Activated B cell treated with CpG ODN at 0.5 μM for 24 hours (primary cell): ENCODE measurements at regions of chr5 and their contacts with region 1.

Region 1: GRCh38 chr5:138575194-138576015 is at the start of gene HSPA9:
- DNase-seq: peak; percentile 92
- ATAC-seq: peak; percentile 86
- H3K4me3 Mint-ChIP-seq: peak within 1 kb of the TSS; percentile 92
- H3K27ac Mint-ChIP-seq: peak within 1 kb of the TSS; percentile 100
- H3K4me1 Mint-ChIP-seq: peaks cover 26% of the 10 kb centered on the region
- H3K27me3 Mint-ChIP-seq: no peaks in the 10 kb centered on the region
- CTCF ChIP-seq: no peak
- total RNA-seq, gene HSPA9: 223 and 224 TPM in 2 replicates

Region 2: GRCh38 chr5:138178516-138179276 is 396.7 kb before region 1 on chr5 and contains the starts of genes BRD8 and KIF20A:
- CTCF ChIA-PET with region 1: no interaction called
- POLR2A ChIA-PET with region 1: interaction called, 8 read pairs
- intact Hi-C with region 1: loop called (anchors 1 kb)
- DNase-seq: peak; percentile 69
- ATAC-seq: peak; percentile 93
- H3K4me3 Mint-ChIP-seq: no peak within 1 kb of the TSS
- H3K27ac Mint-ChIP-seq: no peak within 1 kb of the TSS
- H3K4me1 Mint-ChIP-seq: peaks cover 4% of the 10 kb centered on the region
- H3K27me3 Mint-ChIP-seq: no peaks in the 10 kb centered on the region
- CTCF ChIP-seq: no peak
- total RNA-seq, gene BRD8: 63.5 and 77.8 TPM in 2 replicates
- total RNA-seq, gene KIF20A: 0.40 and 0.44 TPM in 2 replicates

Region 3: GRCh38 chr5:138352071-138352721 is 223.2 kb before region 1 on chr5 and contains the start of gene KDM3B:
- CTCF ChIA-PET with region 1: interaction called, 3 read pairs
- POLR2A ChIA-PET with region 1: interaction called, 16 read pairs
- intact Hi-C with region 1: no loop called
- DNase-seq: peak; percentile 99
- ATAC-seq: peak; percentile 86
- H3K4me3 Mint-ChIP-seq: peak within 1 kb of the TSS; percentile 92
- H3K27ac Mint-ChIP-seq: peak within 1 kb of the TSS; percentile 91
- H3K4me1 Mint-ChIP-seq: peaks cover 51% of the 10 kb centered on the region
- H3K27me3 Mint-ChIP-seq: no peaks in the 10 kb centered on the region
- CTCF ChIP-seq: peak; percentile 99
- total RNA-seq, gene KDM3B: 85.5 and 94.0 TPM in 2 replicates

Region 4: GRCh38 chr5:138542956-138543729 is 32.3 kb before region 1 on chr5 and contains the start of gene ETF1:
- CTCF ChIA-PET with region 1: interaction called, 4 read pairs
- POLR2A ChIA-PET with region 1: interaction called, 73 read pairs
- intact Hi-C with region 1: loop called (anchors 1 kb)
- DNase-seq: peak; percentile 97
- ATAC-seq: peak; percentile 90
- H3K4me3 Mint-ChIP-seq: peak within 1 kb of the TSS; percentile 100
- H3K27ac Mint-ChIP-seq: peak within 1 kb of the TSS; percentile 99
- H3K4me1 Mint-ChIP-seq: peaks cover 66% of the 10 kb centered on the region
- H3K27me3 Mint-ChIP-seq: no peaks in the 10 kb centered on the region
- CTCF ChIP-seq: no peak
- total RNA-seq, gene ETF1: 95.7 and 99.6 TPM in 2 replicates

Region 5: GRCh38 chr5:139197710-139198669 is 622.6 kb after region 1 on chr5 and contains the start of gene SIL1:
- CTCF ChIA-PET with region 1: no interaction called
- POLR2A ChIA-PET with region 1: interaction called, 10 read pairs
- intact Hi-C with region 1: loop called (anchors 1 kb)
- DNase-seq: peak; percentile 91
- ATAC-seq: peak; percentile 98
- H3K4me3 Mint-ChIP-seq: peak within 1 kb of the TSS; percentile 91
- H3K27ac Mint-ChIP-seq: peak within 1 kb of the TSS; percentile 90
- H3K4me1 Mint-ChIP-seq: peaks cover 21% of the 10 kb centered on the region
- H3K27me3 Mint-ChIP-seq: no peaks in the 10 kb centered on the region
- CTCF ChIP-seq: no peak
- total RNA-seq, gene SIL1: 16.1 and 22.0 TPM in 2 replicates

Region 6: DNA sequence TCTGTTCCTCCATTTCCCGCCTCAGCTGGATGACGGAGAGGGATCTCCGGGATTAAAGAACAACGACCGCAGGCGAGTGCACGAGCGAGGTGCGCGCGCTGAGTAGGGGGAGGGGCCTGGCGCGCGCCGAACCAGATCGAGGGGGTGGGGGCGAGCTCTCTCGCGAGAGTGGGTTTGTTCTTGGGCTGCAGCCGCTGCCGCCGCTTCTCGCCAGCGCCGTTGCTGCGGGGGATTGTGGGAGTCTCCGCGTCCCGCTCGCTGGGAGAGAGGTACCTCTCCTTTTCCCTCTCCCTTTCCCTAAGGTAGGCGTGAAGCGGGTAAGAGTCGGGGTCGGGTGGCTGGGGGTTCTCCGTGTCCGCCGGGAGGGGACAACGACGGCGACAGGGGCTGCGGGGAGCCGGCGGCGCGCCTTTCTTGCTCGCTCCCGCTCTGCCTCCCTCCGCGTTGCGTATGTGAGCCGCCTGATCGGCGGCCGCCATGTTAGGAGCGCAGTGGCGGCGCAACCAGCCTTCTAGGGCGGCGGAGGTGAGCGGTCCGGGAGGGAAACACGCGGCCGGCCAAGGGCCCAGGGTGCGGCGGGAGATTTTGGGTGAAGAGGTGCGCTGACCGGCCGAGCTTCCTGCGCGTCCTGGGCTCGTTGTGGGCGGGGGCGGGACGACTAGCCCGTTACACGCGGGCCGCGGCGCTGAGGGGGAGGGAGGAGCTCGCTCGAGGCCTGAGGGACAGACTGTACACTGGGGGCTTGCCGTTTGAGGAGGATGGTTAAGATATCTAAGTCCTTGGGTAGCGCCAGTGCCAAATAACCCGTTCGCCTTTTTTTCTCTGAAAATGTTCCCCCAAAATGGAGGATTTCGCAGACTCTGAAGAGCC is 718.3 kb after region 1 on chr5 and contains the start of gene MATR3:
- CTCF ChIA-PET with region 1: no interaction called
- POLR2A ChIA-PET with region 1: interaction called, 15 read pairs
- intact Hi-C with region 1: no loop called
- DNase-seq: peak; percentile 87
- ATAC-seq: peak; percentile 90
- H3K4me3 Mint-ChIP-seq: peak within 1 kb of the TSS; percentile 97
- H3K27ac Mint-ChIP-seq: peak within 1 kb of the TSS; percentile 96
- H3K4me1 Mint-ChIP-seq: peaks cover 48% of the 10 kb centered on the region
- H3K27me3 Mint-ChIP-seq: no peaks in the 10 kb centered on the region
- CTCF ChIP-seq: no peak
- total RNA-seq, gene MATR3: 242 and 294 TPM in 2 replicates

Region 7: GRCh38 chr5:140107312-140108083 is 1532.1 kb after region 1 on chr5:
- CTCF ChIA-PET with region 1: no interaction called
- POLR2A ChIA-PET with region 1: no interaction called
- intact Hi-C with region 1: loop called (anchors 10 kb)
- DNase-seq: peak; percentile 92
- ATAC-seq: peak; percentile 89
- H3K4me3 Mint-ChIP-seq: peak overlapping the region; percentile 98
- H3K27ac Mint-ChIP-seq: peak overlapping the region; percentile 97
- H3K4me1 Mint-ChIP-seq: peaks cover 44% of the 10 kb centered on the region
- H3K27me3 Mint-ChIP-seq: peaks cover 15% of the 10 kb centered on the region
- CTCF ChIP-seq: no peak

Region 8: DNA sequence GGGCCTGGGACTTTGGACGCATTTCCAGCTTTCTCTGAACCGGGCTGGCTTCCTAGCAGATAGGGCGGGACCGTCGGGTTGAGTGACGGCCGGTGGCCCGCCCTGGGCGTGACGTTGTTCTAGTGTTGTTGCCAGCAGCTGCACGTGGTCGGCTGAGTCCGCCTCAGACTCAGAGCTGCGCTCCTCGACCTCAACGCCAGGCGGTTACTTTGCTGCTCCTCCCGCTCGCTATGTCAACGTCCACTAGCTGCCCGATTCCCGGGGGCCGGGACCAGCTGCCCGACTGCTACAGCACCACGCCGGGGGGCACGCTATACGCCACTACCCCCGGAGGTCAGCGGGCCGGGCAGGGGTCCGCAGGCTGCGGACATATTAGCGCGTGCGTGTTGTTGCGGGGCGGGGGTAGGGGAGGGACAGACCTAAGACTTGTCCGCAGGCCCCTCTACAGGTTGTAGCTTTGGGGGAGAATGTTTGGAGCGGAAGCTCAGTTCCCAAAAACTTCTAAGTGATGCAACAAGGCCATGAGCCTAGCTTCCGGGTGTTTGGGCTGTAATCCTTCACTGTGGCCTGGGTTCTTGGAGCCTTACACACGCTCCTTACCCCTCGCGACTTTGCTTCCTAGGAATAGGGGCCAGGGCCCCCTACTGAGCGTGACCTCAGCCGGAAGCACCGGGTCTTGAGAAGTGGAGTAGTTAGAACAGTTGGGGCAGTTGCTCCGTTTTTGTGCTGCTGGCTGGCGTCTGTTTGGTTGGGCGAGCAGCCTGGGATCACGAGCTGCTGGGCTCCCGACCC is 1972.3 kb after region 1 on chr5 and contains the start of gene EIF4EBP3:
- CTCF ChIA-PET with region 1: no interaction called
- POLR2A ChIA-PET with region 1: no interaction called
- intact Hi-C with region 1: no loop called
- DNase-seq: peak; percentile 74
- ATAC-seq: peak; percentile 97
- H3K4me3 Mint-ChIP-seq: peak within 1 kb of the TSS; percentile 86
- H3K27ac Mint-ChIP-seq: peak within 1 kb of the TSS; percentile 95
- H3K4me1 Mint-ChIP-seq: peaks cover 28% of the 10 kb centered on the region
- H3K27me3 Mint-ChIP-seq: no peaks in the 10 kb centered on the region
- CTCF ChIP-seq: no peak
- total RNA-seq, gene EIF4EBP3: 14.4 and 18.2 TPM in 2 replicates